ENCODE measurements at regions of chr5 and their contacts with region 1.

Region 1: DNA sequence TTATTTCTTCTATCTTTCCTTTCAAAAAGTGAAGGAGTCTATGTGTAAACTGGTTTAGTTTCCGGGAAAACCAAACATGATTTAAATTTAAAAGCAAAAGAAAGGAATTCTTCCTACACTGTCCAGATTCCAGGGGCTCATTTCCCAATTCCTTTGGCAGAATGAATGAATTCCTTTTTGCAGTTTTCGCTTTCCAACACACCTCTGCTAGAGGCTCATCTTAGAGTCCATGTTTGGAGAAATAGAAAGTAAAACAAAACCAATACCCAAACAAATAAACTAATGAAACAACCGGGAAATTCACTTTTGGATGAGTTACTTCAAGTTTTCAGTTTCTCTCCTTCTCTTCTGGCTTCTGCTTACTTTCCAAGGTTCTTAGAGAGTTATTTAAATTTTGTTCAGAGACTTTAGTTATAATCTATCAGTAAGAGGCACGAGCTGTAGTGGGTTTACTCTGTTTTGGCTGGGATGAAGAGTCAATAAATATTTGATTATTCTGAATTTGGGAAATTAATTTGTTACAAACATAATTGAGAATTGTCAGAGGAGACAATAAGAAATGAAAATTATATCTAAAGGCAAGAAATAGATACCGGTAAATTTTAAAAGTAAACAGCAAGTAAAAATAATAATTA is 365.0 kb upstream of the CDH9 start:
- DNase-seq: peak; percentile 46
- ATAC-seq: peak; percentile 66
- H3K4me3 ChIP-seq: peak overlapping the region; percentile 76
- H3K27ac ChIP-seq: no peak overlapping the region
- H3K4me1 ChIP-seq: no peaks in the 10 kb centered on the region
- H3K27me3 ChIP-seq: no peaks in the 10 kb centered on the region
- CTCF ChIP-seq: no peak

Region 2: DNA sequence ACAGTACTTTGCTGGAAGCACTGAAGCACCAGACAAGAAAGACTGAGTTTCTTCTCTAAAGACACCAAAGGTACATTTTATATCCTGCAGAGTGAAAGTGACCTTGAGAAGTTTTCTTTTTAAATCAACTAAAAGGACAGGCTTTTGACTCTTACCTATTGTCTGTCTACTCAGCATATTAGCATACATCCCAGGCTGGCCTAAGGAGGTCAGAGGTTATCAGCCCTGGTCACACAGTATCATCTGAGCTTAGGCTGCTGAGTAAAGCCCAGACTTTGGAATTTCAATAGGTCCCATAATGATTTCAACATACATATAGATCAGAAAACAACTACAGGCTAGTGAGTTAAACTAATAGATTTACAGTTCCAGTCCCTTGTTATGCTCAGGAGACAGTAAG is 354.9 kb before region 1 on chr5:
- CTCF ChIA-PET with region 1: no interaction called
- POLR2A ChIA-PET with region 1: interaction called, 10 read pairs
- intact Hi-C with region 1: no loop called
- DNase-seq: no peak
- ATAC-seq: no peak
- H3K4me3 ChIP-seq: no peak overlapping the region
- H3K27ac ChIP-seq: no peak overlapping the region
- H3K4me1 ChIP-seq: no peaks in the 10 kb centered on the region
- H3K27me3 ChIP-seq: no peaks in the 10 kb centered on the region
- CTCF ChIP-seq: no peak

Region 3: DNA sequence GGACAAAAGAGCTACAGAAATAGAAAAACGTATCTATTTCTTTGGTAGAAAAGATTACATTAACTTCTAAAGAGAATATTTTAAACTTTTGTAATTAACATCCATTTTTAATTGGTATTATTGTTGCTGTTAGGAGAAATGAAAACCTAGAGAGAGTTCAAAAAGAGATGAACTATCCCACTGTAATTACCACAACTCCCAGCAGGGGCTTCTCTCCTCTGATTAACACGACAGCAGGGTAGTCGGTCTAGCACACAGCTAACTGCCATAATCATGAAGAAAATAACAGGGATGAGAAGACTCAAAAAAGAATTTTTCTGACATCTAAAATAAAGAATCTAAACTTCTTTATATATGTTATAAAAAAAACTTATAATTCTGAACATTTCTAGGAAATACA is 278.8 kb before region 1 on chr5:
- CTCF ChIA-PET with region 1: no interaction called
- POLR2A ChIA-PET with region 1: no interaction called
- intact Hi-C with region 1: loop called (anchors 10 kb)
- DNase-seq: peak; percentile 56
- ATAC-seq: peak; percentile 73
- H3K4me3 ChIP-seq: no peak overlapping the region
- H3K27ac ChIP-seq: no peak overlapping the region
- H3K4me1 ChIP-seq: no peaks in the 10 kb centered on the region
- H3K27me3 ChIP-seq: no peaks in the 10 kb centered on the region
- CTCF ChIP-seq: peak; percentile 60

Region 4: DNA sequence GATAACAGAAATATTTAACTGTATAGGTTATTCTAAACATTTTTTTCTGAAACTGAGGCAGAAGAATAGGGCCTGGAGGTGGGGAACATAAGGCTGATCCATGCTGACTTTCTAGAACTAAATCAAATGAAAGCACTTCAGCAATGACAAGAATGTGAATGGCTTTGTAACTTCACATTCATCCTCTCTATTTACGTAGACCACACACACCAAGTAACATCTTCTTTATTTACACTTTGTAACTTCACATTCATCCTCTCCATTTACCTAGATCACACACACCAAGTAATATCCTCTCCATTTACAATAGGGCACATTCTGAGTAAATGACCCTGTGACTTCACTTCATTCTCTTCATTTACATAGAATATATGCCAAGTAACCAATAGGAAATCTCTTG is 113.2 kb before region 1 on chr5:
- CTCF ChIA-PET with region 1: no interaction called
- POLR2A ChIA-PET with region 1: no interaction called
- intact Hi-C with region 1: no loop called
- DNase-seq: no peak
- ATAC-seq: no peak
- H3K4me3 ChIP-seq: no peak overlapping the region
- H3K27ac ChIP-seq: no peak overlapping the region
- H3K4me1 ChIP-seq: no peaks in the 10 kb centered on the region
- H3K27me3 ChIP-seq: no peaks in the 10 kb centered on the region
- CTCF ChIP-seq: no peak

Measured in PC-3 (cell line).